A549 (cell line): ENCODE measurements at regions of chr2 and their contacts with region 1.

Region 1: GRCh38 chr2:97697252-97698235 is 15.8 kb upstream of the ZAP70 start:
- DNase-seq: peak; percentile 63 to 79
- ATAC-seq: peak; percentile 85 to 92; a peak in 5 of 6 replicates
- H3K4me3 ChIP-seq: no peak overlapping the region
- H3K27ac ChIP-seq: no peak overlapping the region
- H3K4me1 ChIP-seq: no peaks in the 10 kb centered on the region
- CTCF ChIP-seq: peak; percentile 95
- EP300 ChIP-seq: no peak
- POLR2A ChIP-seq: no peak
- RAD21 ChIP-seq: peak; percentile 99

Region 2: GRCh38 chr2:96065381-96065930 is 1632.1 kb before region 1 on chr2:
- CTCF ChIA-PET with region 1: interaction called, 12 read pairs
- POLR2A ChIA-PET with region 1: no interaction called
- DNase-seq: no peak
- ATAC-seq: no peak
- H3K4me3 ChIP-seq: no peak overlapping the region
- H3K27ac ChIP-seq: no peak overlapping the region
- H3K4me1 ChIP-seq: peaks cover 26% of the 10 kb centered on the region
- CTCF ChIP-seq: no peak
- EP300 ChIP-seq: no peak
- POLR2A ChIP-seq: no peak
- RAD21 ChIP-seq: no peak

Region 3: GRCh38 chr2:97675430-97676113 is 22.0 kb before region 1 on chr2:
- CTCF ChIA-PET with region 1: interaction called, 19 read pairs
- POLR2A ChIA-PET with region 1: no interaction called
- DNase-seq: no peak
- ATAC-seq: no peak
- H3K4me3 ChIP-seq: no peak overlapping the region
- H3K27ac ChIP-seq: no peak overlapping the region
- H3K4me1 ChIP-seq: no peaks in the 10 kb centered on the region
- CTCF ChIP-seq: no peak
- EP300 ChIP-seq: no peak
- POLR2A ChIP-seq: no peak
- RAD21 ChIP-seq: no peak

Region 4: DNA sequence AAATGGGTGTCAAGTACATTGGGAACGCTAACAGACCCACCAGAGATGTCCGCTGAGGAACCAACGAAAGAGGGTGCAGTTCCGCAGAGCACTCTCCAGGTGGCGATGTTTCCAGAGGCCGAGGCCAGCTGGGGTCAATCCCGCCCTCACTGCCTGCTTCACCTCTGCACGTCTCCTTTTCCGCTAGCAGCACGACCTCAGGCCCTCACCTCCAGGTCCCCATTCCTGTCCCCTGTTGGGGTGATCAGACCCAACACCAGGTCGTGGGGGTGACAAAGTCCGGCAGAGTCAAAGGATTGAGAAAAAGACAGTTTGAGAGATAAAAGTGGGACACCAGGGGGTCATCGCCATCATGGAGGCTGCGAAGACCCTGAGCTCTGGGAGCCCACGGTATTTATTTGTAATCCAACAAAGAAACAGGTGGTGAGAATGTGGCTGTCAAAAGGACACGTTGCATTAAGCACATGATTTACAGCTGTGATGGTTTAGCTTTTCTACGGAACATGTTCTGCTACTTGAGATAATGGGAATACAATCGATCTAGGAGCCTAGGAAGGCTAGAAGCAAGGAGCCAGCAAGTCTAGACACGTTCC is 43.1 kb after region 1 on chr2:
- CTCF ChIA-PET with region 1: interaction called, 11 read pairs
- POLR2A ChIA-PET with region 1: no interaction called
- DNase-seq: peak; percentile 65 to 80
- ATAC-seq: peak; percentile 79 to 88
- H3K4me3 ChIP-seq: no peak overlapping the region
- H3K27ac ChIP-seq: no peak overlapping the region
- H3K4me1 ChIP-seq: no peaks in the 10 kb centered on the region
- CTCF ChIP-seq: peak; percentile 65
- EP300 ChIP-seq: no peak
- POLR2A ChIP-seq: no peak
- RAD21 ChIP-seq: peak; percentile 52 to 56

Region 5: DNA sequence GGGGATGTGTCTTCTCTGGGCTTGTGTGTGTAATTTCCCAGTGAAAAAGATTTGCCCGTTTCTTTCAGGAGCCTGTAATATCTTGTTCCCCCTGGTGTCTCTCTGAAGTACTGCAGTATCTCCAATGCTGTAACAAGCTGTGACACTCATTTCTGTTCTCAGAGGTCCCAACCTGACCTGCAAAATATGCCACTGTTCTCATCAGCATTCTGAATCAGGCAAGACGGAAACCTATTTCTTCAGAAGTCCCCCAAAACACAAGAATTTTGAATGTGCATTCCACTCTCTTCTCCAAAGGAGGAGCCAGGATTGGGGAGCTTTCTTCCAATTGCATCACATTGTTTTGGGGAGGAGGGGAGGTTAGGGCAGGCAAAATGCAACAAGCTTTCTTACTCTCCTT is 571.7 kb after region 1 on chr2:
- CTCF ChIA-PET with region 1: interaction called, 11 read pairs
- POLR2A ChIA-PET with region 1: no interaction called
- DNase-seq: peak; percentile 44 to 51
- ATAC-seq: peak; percentile 74 to 80; a peak in 5 of 6 replicates
- H3K4me3 ChIP-seq: no peak overlapping the region
- H3K27ac ChIP-seq: no peak overlapping the region; a peak in 1 of 6 replicates
- H3K4me1 ChIP-seq: no peaks in the 10 kb centered on the region
- CTCF ChIP-seq: peak; percentile 53
- EP300 ChIP-seq: no peak
- POLR2A ChIP-seq: no peak
- RAD21 ChIP-seq: peak; percentile 55 to 69; a peak in 4 of 5 replicates